Posterior cingulate gyrus (tissue), 11 donors: ENCODE measurements at regions of chr4 and their contacts with region 1.

Region 1: GRCh38 chr4:83054928-83055327 is 19.9 kb downstream of the COPS4 start:
- DNase-seq: no peak

Region 2: DNA sequence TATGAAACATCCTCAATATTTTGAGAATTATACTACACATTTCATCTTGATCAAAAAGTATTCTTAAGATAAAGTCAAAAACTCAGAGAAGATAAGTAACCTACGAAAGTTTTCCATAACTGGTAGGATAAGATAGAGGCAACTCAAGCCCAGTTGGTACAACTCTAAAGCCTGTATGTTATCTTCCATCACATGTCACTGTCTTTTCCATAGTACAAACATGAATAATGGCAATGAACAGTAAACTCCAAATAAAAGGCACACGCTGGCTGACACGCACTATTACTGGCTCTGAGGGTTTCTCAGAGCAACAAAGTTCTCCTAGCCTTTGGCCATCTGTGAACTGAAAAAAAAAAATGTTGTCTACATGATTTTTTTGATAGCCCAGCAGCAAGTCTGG is 71.5 kb before region 1 on chr4:
- intact Hi-C with region 1: loop called (anchors 2 kb)
- DNase-seq: no peak